ENCODE measurements at regions of chr3 and their contacts with region 1.

Region 1: GRCh38 chr3:6079011-6079410 is 781.9 kb upstream of the GRM7 start:
- DNase-seq: no peak
- H3K4me3 ChIP-seq: no peak overlapping the region
- H3K27ac ChIP-seq: no peak overlapping the region
- H3K4me1 ChIP-seq: no peaks in the 10 kb centered on the region
- H3K27me3 ChIP-seq: no peaks in the 10 kb centered on the region
- CTCF ChIP-seq: no peak

Region 2: DNA sequence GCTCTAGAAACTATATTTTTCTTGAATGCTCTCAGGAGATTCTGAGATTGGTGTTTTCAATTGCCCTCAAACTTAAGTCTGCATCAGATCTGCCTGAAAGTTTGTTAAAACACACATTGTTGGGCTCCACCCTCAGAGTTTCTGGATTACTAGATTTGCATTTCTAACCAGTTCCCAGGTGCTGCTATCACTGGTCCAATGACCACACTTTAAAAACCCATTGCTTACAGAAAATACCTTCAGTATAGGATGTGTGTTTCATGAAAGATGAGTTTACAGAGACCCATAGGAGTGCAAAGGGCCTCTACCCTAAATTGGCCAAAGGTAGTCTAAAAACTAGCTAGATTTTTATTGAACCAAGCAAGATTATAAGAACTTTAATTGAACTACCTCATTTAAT is 799.7 kb after region 1 on chr3:
- CTCF ChIA-PET with region 1: no interaction called
- POLR2A ChIA-PET with region 1: interaction called, 27 read pairs
- intact Hi-C with region 1: no loop called
- DNase-seq: no peak
- H3K4me3 ChIP-seq: no peak overlapping the region
- H3K27ac ChIP-seq: no peak overlapping the region
- H3K4me1 ChIP-seq: no peaks in the 10 kb centered on the region
- H3K27me3 ChIP-seq: no peaks in the 10 kb centered on the region
- CTCF ChIP-seq: no peak